ENCODE measurements at regions of chr12 and their contacts with region 1.

Region 1: GRCh38 chr12:9701380-9702154 is 31.3 kb downstream of the CLECL1 start:
- DNase-seq: no peak
- ATAC-seq: no peak
- H3K4me3 ChIP-seq: no peak overlapping the region
- H3K27ac ChIP-seq: no peak overlapping the region
- H3K4me1 ChIP-seq: no peaks in the 10 kb centered on the region
- H3K27me3 ChIP-seq: no peaks in the 10 kb centered on the region
- CTCF ChIP-seq: no peak

Region 2: DNA sequence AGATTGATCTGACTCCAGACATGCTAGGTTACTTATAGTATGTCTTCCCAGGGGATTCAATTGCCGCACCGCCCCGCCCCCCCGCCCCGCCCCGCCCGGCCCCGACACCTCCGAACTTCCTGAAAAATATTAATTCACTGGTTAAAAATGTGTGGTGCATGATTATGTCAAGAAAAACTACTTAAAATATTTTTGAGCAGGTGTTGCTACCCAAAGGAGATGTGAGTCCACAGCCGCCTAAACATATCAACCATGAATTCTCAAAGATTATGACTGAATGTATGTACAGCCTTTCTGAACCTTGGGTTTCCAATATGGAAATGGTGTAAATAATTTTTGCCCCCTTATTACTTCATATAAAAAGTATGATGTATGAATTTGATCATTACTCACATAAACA is 1006.5 kb before region 1 on chr12:
- CTCF ChIA-PET with region 1: interaction called, 11 read pairs
- POLR2A ChIA-PET with region 1: no interaction called
- in situ Hi-C with region 1: no loop called
- intact Hi-C with region 1: no loop called
- DNase-seq: no peak
- ATAC-seq: no peak
- H3K4me3 ChIP-seq: no peak overlapping the region
- H3K27ac ChIP-seq: no peak overlapping the region
- H3K4me1 ChIP-seq: peaks cover 5% of the 10 kb centered on the region; the same call in 1 of the 2 replicates
- H3K27me3 ChIP-seq: no peaks in the 10 kb centered on the region
- CTCF ChIP-seq: no peak

Region 3: DNA sequence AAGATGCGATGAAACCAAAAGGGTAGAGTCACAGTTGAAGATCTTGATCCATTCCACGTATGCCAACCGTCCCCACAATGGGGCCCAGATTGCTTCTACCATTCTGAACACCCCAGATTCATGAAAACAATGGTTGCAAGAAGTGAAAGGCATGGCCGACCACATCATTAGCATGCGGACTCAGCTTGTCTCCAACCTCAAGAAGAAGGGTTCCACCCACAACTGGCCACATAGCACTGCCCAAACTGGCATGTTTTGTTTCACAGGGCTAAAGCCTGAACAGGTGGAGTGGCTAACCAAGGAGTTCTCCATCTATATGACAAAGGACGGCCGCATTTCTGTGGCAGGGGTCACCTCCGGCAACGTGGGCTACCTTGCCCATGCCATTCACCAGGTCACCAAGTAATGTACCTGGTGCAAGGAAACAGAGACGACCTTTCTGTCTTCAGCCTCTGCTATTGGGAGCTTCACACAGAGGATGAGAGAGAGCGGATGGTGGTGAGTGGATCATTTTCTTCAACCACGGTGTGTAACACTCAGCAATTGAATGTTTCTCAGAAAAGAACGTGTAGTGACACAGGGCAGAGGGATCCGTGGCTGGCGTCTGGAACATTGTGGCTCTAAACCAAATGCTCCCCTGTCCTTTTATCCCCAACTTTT is 58.8 kb before region 1 on chr12:
- CTCF ChIA-PET with region 1: no interaction called
- POLR2A ChIA-PET with region 1: no interaction called
- in situ Hi-C with region 1: no loop called
- intact Hi-C with region 1: no loop called
- DNase-seq: no peak
- ATAC-seq: no peak
- H3K4me3 ChIP-seq: no peak overlapping the region
- H3K27ac ChIP-seq: no peak overlapping the region
- H3K4me1 ChIP-seq: peaks cover 3% of the 10 kb centered on the region; the same call in 1 of the 2 replicates
- H3K27me3 ChIP-seq: no peaks in the 10 kb centered on the region
- CTCF ChIP-seq: no peak

Region 4: DNA sequence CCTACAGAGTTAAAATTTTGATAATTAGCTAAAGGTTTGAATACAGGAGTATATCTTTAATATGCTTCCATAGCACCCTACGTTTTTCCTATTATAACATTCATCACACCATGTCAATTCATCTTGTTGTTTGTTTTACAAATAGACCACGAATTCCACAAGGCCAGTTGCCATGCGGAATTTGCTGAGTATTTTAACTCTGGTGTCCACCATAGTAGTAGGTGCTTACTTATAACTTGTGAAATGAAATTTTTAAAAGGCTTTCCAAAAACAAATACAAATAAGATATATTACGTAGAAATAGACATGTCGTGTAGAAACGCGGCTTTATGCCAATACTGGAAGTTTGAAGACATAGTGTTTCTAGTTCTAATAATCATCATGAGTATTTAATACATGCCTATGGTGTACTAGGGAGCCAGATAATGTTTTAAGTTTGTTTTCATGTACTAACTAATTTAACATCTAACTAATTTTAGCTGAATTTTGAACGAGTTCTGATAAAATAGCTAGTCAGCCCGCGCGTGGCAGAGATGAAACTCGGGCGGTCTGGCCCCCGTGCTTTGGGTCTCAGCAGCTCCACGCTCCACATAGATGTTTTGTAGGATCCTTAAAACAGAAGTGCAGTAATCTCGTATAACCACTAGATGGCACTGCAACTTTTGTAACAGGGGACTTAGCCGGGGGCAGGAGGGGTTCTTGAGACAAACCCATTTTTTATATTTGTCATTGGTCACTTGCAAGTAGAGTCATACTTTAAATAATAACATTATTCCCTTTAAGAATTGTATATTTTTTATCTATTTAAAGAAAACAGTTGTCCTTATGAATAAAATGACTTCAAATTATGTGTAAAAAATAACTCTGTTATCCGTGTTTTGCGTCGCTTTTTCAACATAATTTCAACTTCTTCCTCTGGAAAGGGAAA is 49.0 kb after region 1 on chr12:
- CTCF ChIA-PET with region 1: no interaction called
- POLR2A ChIA-PET with region 1: no interaction called
- in situ Hi-C with region 1: no loop called
- intact Hi-C with region 1: no loop called
- DNase-seq: no peak
- ATAC-seq: peak; percentile 90
- H3K4me3 ChIP-seq: peak overlapping the region in 1 of 2 experiments; percentile 24; a peak in 1 of 4 replicates
- H3K27ac ChIP-seq: no peak overlapping the region
- H3K4me1 ChIP-seq: no peaks in the 10 kb centered on the region; the same call in 1 of the 2 replicates
- H3K27me3 ChIP-seq: no peaks in the 10 kb centered on the region
- CTCF ChIP-seq: peak; percentile 75